CD14-positive monocyte (primary cell): ENCODE measurements at regions of chr9 and their contacts with region 1.

Region 1: GRCh38 chr9:36328798-36329411 is 70.7 kb upstream of the GNE start:
- DNase-seq: peak; percentile 42 to 62 (median 61)
- H3K4me3 ChIP-seq: no peak overlapping the region
- H3K4me3 Mint-ChIP-seq: no peak overlapping the region
- H3K27ac ChIP-seq: no peak overlapping the region
- H3K27ac Mint-ChIP-seq: no peak overlapping the region
- H3K4me1 ChIP-seq: peaks cover 8 to 10% of the 10 kb centered on the region in 2 donors
- H3K4me1 Mint-ChIP-seq: peaks cover 9% of the 10 kb centered on the region
- H3K27me3 ChIP-seq: no peaks in the 10 kb centered on the region
- H3K27me3 Mint-ChIP-seq: no peaks in the 10 kb centered on the region
- CTCF ChIP-seq: peak; percentile 94

Region 2: DNA sequence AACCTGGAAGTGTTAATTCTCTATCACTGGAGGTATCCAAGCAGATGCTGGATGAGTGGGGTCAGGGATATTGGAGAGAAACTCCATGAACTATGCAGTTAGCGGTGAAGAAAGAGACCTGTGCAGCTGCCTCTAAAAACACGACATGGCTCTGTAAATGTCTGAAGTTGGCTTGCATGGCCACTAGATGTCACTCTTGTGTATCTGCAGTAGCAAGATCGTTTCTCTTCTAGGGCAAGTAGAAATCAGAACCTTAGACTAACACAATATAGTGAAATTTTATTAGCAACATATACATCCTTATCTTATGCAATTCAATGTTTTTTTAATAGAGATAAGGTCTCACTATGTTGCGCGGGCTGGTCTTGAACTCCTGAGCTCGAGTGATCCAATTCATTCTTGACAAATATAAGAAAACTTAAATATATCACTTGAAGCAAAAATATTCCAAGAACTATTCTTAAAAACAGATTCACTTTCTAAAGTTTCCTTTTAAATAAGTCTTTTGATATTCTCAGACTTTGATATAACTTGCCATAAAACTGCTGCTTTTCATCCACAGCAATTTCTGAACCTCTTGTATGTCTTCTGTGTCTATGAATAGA is 373.9 kb before region 1 on chr9:
- intact Hi-C with region 1: loop called in 1 of 2 experiments (anchors 10 kb)
- DNase-seq: peak; percentile 37 to 60 (median 58)
- H3K4me3 ChIP-seq: no peak overlapping the region
- H3K4me3 Mint-ChIP-seq: no peak overlapping the region
- H3K27ac ChIP-seq: no peak overlapping the region
- H3K27ac Mint-ChIP-seq: no peak overlapping the region
- H3K4me1 ChIP-seq: peaks cover 0 to 3% of the 10 kb centered on the region in 2 donors
- H3K4me1 Mint-ChIP-seq: peaks cover 7% of the 10 kb centered on the region
- H3K27me3 ChIP-seq: peaks cover 0 to 3% of the 10 kb centered on the region in 2 donors
- H3K27me3 Mint-ChIP-seq: peaks cover 6 to 17% (median 9%) of the 10 kb centered on the region in 3 donors
- CTCF ChIP-seq: peak; percentile 84

Region 3: DNA sequence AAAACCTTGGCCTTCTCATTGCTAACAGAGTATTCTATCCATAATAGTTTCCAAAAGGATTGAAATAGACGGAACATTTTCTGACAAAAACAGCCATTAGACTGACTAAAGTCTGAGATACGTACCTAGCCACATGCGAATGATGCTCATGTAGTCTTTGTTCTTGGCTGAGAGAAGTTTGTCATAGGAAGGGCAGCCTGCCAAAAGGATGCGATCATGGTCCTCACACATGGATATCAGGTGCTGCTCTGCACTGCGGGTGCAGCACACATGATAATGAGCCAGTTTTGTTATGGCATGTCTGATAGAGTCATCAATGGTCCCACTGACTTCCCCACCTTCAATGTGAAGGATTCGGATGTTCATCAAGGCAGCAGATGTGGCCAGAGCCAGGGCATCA is 83.0 kb before region 1 on chr9:
- intact Hi-C with region 1: loop called (anchors 2 kb)
- DNase-seq: no peak
- H3K4me3 ChIP-seq: no peak overlapping the region
- H3K4me3 Mint-ChIP-seq: no peak overlapping the region
- H3K27ac ChIP-seq: no peak overlapping the region
- H3K27ac Mint-ChIP-seq: peak overlapping the region in 1 of 7 donors; percentile 18
- H3K4me1 ChIP-seq: peaks cover 11 to 22% of the 10 kb centered on the region in 2 donors
- H3K4me1 Mint-ChIP-seq: peaks cover 21% of the 10 kb centered on the region
- H3K27me3 ChIP-seq: no peaks in the 10 kb centered on the region
- H3K27me3 Mint-ChIP-seq: no peaks in the 10 kb centered on the region
- CTCF ChIP-seq: no peak

Region 4: DNA sequence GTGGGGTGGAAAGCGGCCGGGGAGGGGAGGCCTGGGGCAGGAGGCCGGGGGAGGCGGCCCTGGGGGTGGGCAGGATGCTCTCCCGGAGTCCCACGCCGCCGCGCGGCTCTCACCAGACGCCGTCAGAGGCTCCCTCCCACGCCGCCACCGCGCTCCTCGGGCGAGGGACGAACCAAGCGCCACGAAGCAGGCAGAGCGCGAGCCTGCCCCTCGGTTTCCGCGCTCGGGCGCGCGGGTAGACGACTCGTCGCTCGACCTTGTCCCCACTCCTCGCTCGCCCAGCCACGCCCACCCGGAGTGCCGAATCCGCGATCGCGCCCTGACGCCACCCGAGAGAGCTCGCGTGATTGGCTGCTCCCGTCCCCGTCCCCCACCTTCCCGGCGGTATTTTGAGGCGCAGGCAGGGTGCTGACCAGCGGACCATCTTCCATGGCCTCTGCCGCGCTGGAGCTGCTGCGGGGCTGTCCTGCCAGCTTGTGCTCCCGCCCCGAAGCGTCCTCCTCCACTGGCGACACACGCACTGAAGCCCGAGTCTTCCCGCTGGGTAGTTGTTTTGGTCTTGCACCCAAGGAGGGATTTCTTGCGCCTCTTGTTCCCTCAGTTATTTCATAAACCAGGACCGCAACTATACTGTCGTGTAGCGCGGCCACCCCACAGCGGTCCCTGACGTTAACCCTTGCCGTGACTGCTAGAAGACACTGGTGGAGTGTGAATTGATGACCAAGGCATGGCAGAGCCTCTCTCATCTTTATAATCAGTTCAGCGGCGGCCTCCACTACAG is 70.5 kb before region 1 on chr9 and contains the start of gene GNE:
- intact Hi-C with region 1: no loop called
- DNase-seq: peak; percentile 90 to 95 (median 92)
- H3K4me3 ChIP-seq: peak within 1 kb of the TSS; percentile 52 to 92 (median 75)
- H3K4me3 Mint-ChIP-seq: peak within 1 kb of the TSS; percentile 90 to 97
- H3K27ac ChIP-seq: peak within 1 kb of the TSS; percentile 85 to 88
- H3K27ac Mint-ChIP-seq: peak within 1 kb of the TSS; percentile 87 to 95 (median 94)
- H3K4me1 ChIP-seq: peaks cover 11 to 15% of the 10 kb centered on the region in 2 donors
- H3K4me1 Mint-ChIP-seq: peaks cover 13% of the 10 kb centered on the region
- H3K27me3 ChIP-seq: no peaks in the 10 kb centered on the region
- H3K27me3 Mint-ChIP-seq: no peaks in the 10 kb centered on the region
- CTCF ChIP-seq: no peak
- polyA plus RNA-seq, gene GNE: 4.1 to 5.0 (median 4.5) TPM